B cell (primary cell): ENCODE measurements at regions of chr5 and their contacts with region 1.

Region 1: GRCh38 chr5:89268460-89268859 is 385.5 kb upstream of the MEF2C start:
- DNase-seq: peak; percentile 62
- ATAC-seq: peak; percentile 45
- H3K4me3 ChIP-seq: peak overlapping the region in 1 of 5 experiments; percentile 6
- H3K4me3 Mint-ChIP-seq: peak overlapping the region; percentile 51
- H3K27ac ChIP-seq: peak overlapping the region; percentile 74 to 85
- H3K27ac Mint-ChIP-seq: peak overlapping the region; percentile 82
- H3K4me1 ChIP-seq: peaks cover 71 to 75% of the 10 kb centered on the region in 2 donors
- H3K4me1 Mint-ChIP-seq: peaks cover 71% of the 10 kb centered on the region
- H3K27me3 ChIP-seq: no peaks in the 10 kb centered on the region
- H3K27me3 Mint-ChIP-seq: no peaks in the 10 kb centered on the region
- CTCF ChIP-seq: no peak

Region 2: GRCh38 chr5:88833371-88834130 is 434.9 kb before region 1 on chr5:
- CTCF ChIA-PET with region 1: no interaction called
- POLR2A ChIA-PET with region 1: no interaction called
- intact Hi-C with region 1: loop called (anchors 5 kb)
- DNase-seq: peak; percentile 65
- ATAC-seq: peak; percentile 66
- H3K4me3 ChIP-seq: peak overlapping the region in 3 of 5 experiments; percentile 1 to 47 (median 16)
- H3K4me3 Mint-ChIP-seq: peak overlapping the region; percentile 87
- H3K27ac ChIP-seq: peak overlapping the region; percentile 58 to 94
- H3K27ac Mint-ChIP-seq: peak overlapping the region; percentile 94
- H3K4me1 ChIP-seq: peaks cover 71 to 86% of the 10 kb centered on the region in 2 donors
- H3K4me1 Mint-ChIP-seq: peaks cover 77% of the 10 kb centered on the region
- H3K27me3 ChIP-seq: no peaks in the 10 kb centered on the region
- H3K27me3 Mint-ChIP-seq: no peaks in the 10 kb centered on the region
- CTCF ChIP-seq: no peak

Region 3: DNA sequence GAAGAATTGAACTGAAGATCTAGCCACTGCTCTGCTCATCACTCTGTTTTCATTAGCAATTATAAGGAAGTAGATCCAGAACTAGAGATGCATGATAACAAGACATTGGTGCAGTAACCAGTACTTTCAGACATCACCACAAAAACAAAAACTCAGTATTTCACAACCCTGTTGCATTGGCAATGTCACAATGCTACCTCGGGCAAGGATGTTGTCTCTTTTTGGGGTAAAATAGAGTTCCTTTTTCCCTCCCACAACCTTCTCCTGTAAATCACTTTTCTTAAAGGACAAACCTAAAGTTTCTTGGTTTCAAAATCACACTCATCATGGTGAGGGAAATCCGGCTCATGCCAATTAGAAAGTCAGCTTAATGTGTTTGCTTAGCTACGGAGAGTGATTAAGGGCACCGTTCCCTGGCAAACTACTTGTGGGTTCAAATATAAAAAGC is 34.6 kb after region 1 on chr5:
- CTCF ChIA-PET with region 1: no interaction called
- POLR2A ChIA-PET with region 1: interaction called, 4 read pairs
- intact Hi-C with region 1: loop called (anchors 5 kb)
- DNase-seq: peak; percentile 42
- ATAC-seq: peak; percentile 52
- H3K4me3 ChIP-seq: no peak overlapping the region
- H3K4me3 Mint-ChIP-seq: peak overlapping the region; percentile 56
- H3K27ac ChIP-seq: peak overlapping the region; percentile 11 to 80
- H3K27ac Mint-ChIP-seq: peak overlapping the region; percentile 89
- H3K4me1 ChIP-seq: peaks cover 36 to 41% of the 10 kb centered on the region in 2 donors
- H3K4me1 Mint-ChIP-seq: peaks cover 52% of the 10 kb centered on the region
- H3K27me3 ChIP-seq: no peaks in the 10 kb centered on the region
- H3K27me3 Mint-ChIP-seq: no peaks in the 10 kb centered on the region
- CTCF ChIP-seq: no peak

Region 4: DNA sequence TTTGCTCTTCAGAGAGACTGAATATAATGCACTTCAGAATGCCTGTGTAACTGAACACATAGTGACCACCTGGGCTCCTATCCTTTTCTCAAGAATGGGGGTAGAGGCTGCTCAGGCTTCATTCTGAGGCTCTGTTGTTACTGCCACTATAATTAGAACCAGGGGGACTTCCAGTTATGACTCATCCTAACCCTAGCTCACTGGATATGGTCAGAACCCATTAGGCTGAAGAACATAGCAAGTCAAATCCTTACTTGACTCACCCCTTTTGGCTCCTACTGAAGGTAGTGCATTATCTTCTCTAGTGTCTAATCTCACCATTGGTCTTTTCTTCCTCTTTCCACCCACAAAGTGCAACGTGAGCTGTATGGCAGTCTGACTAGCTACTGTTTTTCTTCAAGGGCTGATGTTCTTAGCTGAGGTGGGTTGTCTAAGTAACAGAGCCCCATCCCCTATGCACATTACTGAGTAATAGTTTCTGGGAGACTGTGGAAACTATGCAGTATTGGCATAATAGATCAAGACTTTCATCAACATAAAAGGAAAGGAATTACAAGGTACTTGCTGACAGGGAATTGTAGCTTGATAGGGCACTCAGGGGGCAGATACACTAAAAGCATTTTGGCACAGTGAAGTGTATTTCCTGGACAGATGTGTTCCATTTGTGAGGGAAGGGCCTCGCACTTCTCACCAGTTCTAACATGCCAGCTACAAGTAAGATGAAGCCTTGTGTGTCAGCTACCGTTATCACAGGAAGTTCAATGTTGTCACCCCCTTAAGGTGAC is 45.5 kb after region 1 on chr5:
- CTCF ChIA-PET with region 1: interaction called, 6 read pairs
- POLR2A ChIA-PET with region 1: interaction called, 9 read pairs
- intact Hi-C with region 1: loop called (anchors 2 kb)
- DNase-seq: peak; percentile 73
- ATAC-seq: peak; percentile 95
- H3K4me3 ChIP-seq: no peak overlapping the region
- H3K4me3 Mint-ChIP-seq: peak overlapping the region; percentile 44
- H3K27ac ChIP-seq: peak overlapping the region; percentile 77 to 94
- H3K27ac Mint-ChIP-seq: peak overlapping the region; percentile 85
- H3K4me1 ChIP-seq: peaks cover 32% of the 10 kb centered on the region in 2 donors
- H3K4me1 Mint-ChIP-seq: peaks cover 44% of the 10 kb centered on the region
- H3K27me3 ChIP-seq: no peaks in the 10 kb centered on the region
- H3K27me3 Mint-ChIP-seq: no peaks in the 10 kb centered on the region
- CTCF ChIP-seq: no peak

Region 5: GRCh38 chr5:89396278-89396954 is 128.0 kb after region 1 on chr5:
- CTCF ChIA-PET with region 1: no interaction called
- POLR2A ChIA-PET with region 1: interaction called, 4 read pairs
- intact Hi-C with region 1: loop called (anchors 5 kb)
- DNase-seq: peak; percentile 50
- ATAC-seq: peak; percentile 71
- H3K4me3 ChIP-seq: peak overlapping the region in 1 of 5 experiments; percentile 13
- H3K4me3 Mint-ChIP-seq: peak overlapping the region; percentile 70
- H3K27ac ChIP-seq: peak overlapping the region; percentile 77 to 89
- H3K27ac Mint-ChIP-seq: peak overlapping the region; percentile 92
- H3K4me1 ChIP-seq: peaks cover 37 to 49% of the 10 kb centered on the region in 2 donors
- H3K4me1 Mint-ChIP-seq: peaks cover 58% of the 10 kb centered on the region
- H3K27me3 ChIP-seq: no peaks in the 10 kb centered on the region
- H3K27me3 Mint-ChIP-seq: no peaks in the 10 kb centered on the region
- CTCF ChIP-seq: no peak